ENCODE measurements at regions of chr14 and their contacts with region 1.

Region 1: DNA sequence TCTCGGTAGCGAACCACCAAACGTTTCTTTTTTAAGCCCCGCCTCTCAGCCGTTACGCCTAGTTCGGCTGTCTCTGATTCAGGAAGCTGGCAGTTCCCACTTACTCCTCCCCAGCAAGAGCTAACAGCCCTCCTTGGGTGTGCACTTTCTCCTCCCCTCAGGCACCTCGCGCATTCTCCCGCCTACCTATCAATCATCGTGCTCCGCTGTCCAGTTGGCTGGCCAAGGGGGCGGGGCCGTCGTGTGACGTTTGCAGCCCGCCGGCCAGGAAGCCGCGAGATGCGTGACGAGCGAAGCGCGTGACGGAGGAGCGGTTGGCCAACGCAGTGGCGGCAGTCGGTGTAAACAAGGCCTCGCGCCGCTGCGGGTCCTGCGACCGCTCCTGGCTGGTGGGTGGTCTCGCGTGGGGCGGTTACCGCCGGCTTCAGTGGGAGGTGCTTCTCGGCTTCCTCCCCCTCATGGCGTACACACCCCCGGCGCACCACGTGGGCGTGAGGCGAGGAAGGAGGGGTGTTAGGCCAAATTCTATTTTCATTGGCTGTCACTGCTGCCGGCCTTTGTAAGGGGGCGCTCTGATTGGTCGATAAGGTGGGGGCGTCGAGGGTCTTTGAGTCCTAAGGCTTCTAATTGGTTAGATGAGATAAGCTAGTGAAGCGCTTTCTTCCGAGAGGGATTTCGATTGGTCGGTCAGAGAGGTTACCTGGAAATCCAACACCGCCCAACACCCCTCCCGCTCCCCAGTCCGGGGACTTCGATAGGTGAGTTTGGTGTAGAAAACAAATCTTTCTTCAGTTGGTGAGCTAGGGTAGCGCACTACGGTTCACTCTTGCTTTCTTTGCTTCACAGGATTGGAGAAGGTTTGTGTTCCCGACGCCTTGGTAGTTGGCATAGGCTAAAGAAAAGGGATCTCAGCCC is at the starts of genes DCAF11 and NRL:
- DNase-seq: peak; percentile 100
- H3K4me3 ChIP-seq: peak within 1 kb of the TSS; percentile 46 to 92 (median 84)
- H3K27ac ChIP-seq: peak within 1 kb of the TSS; percentile 88
- H3K4me1 ChIP-seq: peaks cover 13% of the 10 kb centered on the region
- H3K27me3 ChIP-seq: no peaks in the 10 kb centered on the region
- CTCF ChIP-seq: no peak
- POLR2A ChIP-seq: peak; percentile 39
- total RNA-seq, gene DCAF11: 32.1 and 38.5 TPM in 2 replicates
- total RNA-seq, gene NRL: 0.62 and 0.71 TPM in 2 replicates

Region 2: DNA sequence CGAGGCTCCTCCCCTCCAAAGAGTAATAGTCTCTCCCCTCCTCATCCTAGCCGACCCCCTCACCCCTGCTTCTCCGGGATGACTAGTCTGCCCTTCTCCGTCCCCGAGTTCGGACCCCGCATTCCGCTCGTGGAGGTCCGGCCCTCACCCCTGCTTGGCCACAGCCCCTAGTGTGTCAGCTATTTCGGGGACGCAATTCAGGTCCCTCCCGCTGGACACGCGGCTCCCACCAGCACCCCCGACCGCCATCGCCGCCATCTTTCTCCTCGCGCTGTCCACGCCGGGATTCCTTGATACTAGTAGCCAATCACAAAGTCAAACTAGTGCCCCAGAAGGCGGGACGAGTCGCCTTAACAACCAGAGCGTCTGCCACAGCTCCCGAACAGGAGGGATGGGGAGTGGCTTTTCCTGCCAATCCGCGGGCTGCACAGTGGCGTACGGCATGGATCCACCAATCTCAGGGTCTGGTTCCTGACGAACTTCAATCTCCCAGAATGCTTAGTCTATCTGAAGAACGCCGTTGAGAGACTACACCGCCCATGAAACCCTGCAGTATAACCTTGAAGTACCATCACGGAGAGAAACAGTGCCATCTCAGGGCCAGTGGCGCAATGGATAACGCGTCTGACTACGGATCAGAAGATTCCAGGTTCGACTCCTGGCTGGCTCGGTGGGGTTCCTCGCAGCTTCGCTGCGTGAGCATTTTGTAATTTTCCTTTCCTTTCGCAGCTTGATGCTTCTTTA is 1185.5 kb before region 1 on chr14 and contains the start of gene PRMT5:
- CTCF ChIA-PET with region 1: no interaction called
- POLR2A ChIA-PET with region 1: no interaction called
- dilution Hi-C with region 1: no loop called
- intact Hi-C with region 1: loop called (anchors 5 kb)
- DNase-seq: peak; percentile 100
- H3K4me3 ChIP-seq: peak within 1 kb of the TSS; percentile 66 to 95 (median 81)
- H3K27ac ChIP-seq: peak within 1 kb of the TSS; percentile 68
- H3K4me1 ChIP-seq: peaks cover 16% of the 10 kb centered on the region
- H3K27me3 ChIP-seq: no peaks in the 10 kb centered on the region
- CTCF ChIP-seq: no peak
- POLR2A ChIP-seq: peak; percentile 64
- total RNA-seq, gene PRMT5: 67.2 and 73.1 TPM in 2 replicates

Region 3: DNA sequence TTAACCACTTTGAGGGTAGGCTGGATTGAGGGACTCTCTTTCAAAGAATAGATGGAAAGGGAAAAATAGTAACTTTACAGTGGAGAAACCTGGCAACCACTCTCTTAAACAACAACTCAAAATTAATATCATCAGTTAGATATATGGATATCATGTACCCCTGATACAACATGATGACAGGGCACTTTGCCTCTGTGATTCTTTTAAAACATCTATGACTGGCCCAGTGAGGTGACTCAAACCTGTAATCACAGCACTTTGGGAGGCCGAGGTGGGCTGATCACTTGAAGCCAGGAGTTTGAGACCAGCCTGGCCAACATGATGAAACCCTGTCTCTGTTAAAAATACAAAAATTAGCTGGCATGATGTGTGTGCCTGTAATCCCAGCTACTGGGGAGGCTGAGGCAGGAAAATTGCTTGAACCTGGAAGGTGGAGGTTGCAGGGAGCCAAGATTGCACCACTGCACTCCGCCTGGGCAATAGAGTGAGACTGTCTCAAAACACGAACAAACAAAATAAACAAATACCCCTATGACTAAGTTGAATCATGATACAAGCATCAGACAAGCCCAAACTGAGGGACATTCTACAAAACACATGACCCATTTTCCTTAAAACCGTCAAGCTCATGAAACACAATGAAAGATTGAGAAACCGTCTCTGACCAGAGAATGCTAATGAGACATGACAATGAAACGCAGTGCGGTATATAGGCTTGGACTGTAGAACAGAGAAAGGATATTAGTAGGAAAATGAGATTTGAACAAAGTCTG is 905.0 kb before region 1 on chr14:
- CTCF ChIA-PET with region 1: no interaction called
- POLR2A ChIA-PET with region 1: no interaction called
- dilution Hi-C with region 1: no loop called
- intact Hi-C with region 1: no loop called
- DNase-seq: no peak
- H3K4me3 ChIP-seq: no peak overlapping the region
- H3K27ac ChIP-seq: no peak overlapping the region
- H3K4me1 ChIP-seq: no peaks in the 10 kb centered on the region
- H3K27me3 ChIP-seq: peaks cover 5 to 11% of the 10 kb centered on the region in 2 experiments
- CTCF ChIP-seq: no peak
- POLR2A ChIP-seq: no peak

Region 4: GRCh38 chr14:24071144-24071697 is 43.6 kb before region 1 on chr14 and contains the start of gene CPNE6:
- CTCF ChIA-PET with region 1: no interaction called
- POLR2A ChIA-PET with region 1: no interaction called
- dilution Hi-C with region 1: no loop called
- intact Hi-C with region 1: no loop called
- DNase-seq: no peak
- H3K4me3 ChIP-seq: no peak within 1 kb of the TSS
- H3K27ac ChIP-seq: no peak within 1 kb of the TSS
- H3K4me1 ChIP-seq: no peaks in the 10 kb centered on the region
- H3K27me3 ChIP-seq: no peaks in the 10 kb centered on the region
- CTCF ChIP-seq: no peak
- POLR2A ChIP-seq: no peak
- total RNA-seq, gene CPNE6: not detected in 2 replicates

Region 5: DNA sequence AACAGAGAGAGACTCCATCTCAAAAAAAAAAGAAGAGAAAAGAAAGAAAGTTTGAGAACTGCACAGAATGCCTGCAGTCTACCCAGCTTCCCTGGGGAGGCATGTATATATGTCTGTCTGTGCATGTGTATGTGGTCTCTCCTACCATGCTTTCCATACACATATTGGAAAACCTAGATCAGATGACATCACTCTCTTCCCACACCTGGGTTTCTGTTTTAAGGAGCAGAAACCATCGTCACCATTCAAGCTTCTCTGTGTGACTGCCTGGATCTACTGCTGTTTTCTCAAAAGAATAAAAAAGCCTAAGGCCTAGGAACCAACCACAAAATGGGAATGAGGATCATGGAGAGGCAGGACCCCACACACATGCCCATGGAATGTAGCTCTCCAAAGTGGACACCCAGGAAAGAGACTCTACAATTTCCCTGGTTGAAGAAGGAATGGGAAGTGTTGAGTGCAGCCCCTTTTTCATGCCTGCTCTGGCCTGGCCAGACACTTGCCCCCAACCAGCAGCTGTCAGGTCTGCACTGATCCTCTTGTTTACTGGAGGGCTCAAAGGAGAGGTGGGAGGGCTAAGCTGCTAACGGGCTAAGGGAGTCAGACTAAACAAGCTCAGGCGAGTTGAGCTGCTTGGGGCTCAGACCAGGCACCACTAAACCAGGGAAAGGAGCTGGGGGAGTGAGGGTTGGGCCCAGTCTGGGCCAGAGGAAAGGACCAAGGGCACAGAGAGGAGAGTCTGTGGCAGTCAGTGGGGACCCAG is 28.4 kb before region 1 on chr14:
- CTCF ChIA-PET with region 1: interaction called, 126 read pairs
- POLR2A ChIA-PET with region 1: no interaction called
- dilution Hi-C with region 1: no loop called
- intact Hi-C with region 1: no loop called
- DNase-seq: no peak
- H3K4me3 ChIP-seq: no peak overlapping the region
- H3K27ac ChIP-seq: no peak overlapping the region
- H3K4me1 ChIP-seq: no peaks in the 10 kb centered on the region
- H3K27me3 ChIP-seq: peaks cover 14 to 20% of the 10 kb centered on the region in 2 experiments
- CTCF ChIP-seq: no peak
- POLR2A ChIP-seq: no peak

Region 6: GRCh38 chr14:24135834-24136542 is 21.2 kb after region 1 on chr14 and contains the start of gene PSME1:
- CTCF ChIA-PET with region 1: interaction called, 11 read pairs
- POLR2A ChIA-PET with region 1: interaction called, 10 read pairs
- dilution Hi-C with region 1: no loop called
- intact Hi-C with region 1: loop called (anchors 1 kb)
- DNase-seq: peak; percentile 92
- H3K4me3 ChIP-seq: peak within 1 kb of the TSS; percentile 56 to 93 (median 90)
- H3K27ac ChIP-seq: peak within 1 kb of the TSS; percentile 54
- H3K4me1 ChIP-seq: peaks cover 15% of the 10 kb centered on the region
- H3K27me3 ChIP-seq: no peaks in the 10 kb centered on the region
- CTCF ChIP-seq: no peak
- POLR2A ChIP-seq: peak; percentile 78
- total RNA-seq, gene PSME1: 120 and 135 TPM in 2 replicates

Region 7: DNA sequence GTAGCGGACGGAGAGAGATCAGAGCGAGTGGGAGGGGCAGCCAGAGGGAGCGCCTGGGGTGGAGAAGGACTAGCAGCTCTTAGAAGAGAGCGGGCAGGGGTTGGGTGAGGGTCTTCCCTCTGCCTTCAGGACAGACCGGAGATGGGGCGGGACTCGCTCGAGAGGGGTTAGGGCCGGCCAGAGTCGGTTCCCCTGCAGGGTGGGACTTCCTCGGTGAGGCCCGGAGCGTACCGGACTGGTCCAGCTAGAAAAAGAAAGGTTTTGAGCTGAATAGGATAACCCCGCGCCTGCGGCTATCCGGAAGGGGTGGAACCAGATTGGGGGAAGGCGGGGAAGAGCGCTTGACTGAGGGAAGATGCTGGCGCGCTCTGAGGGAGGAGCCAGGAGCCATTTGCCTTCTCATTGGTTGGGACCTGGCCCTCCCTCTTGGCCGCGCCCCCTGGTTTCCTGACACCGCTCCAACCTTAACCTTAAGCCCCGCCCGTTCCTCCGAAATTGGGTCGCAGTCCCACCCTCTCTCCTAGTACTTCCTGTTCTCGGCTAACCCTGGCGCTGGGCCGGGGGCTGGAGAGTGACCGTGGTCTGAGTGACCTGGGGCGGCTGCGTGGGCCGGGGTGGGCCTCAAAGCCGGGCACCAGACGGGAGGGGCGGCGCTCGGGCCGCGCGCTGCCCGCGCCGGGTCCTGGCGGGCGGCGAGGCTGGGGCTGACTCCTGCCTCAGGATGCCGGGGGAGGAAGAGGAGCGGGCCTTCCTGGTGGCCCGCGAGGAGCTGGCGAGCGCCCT is 32.4 kb after region 1 on chr14 and contains the start of gene RNF31:
- CTCF ChIA-PET with region 1: interaction called, 3 read pairs
- POLR2A ChIA-PET with region 1: interaction called, 13 read pairs
- dilution Hi-C with region 1: no loop called
- intact Hi-C with region 1: loop called (anchors 1 kb)
- DNase-seq: peak; percentile 97
- H3K4me3 ChIP-seq: peak within 1 kb of the TSS; percentile 59 to 86 (median 79)
- H3K27ac ChIP-seq: peak within 1 kb of the TSS; percentile 52
- H3K4me1 ChIP-seq: peaks cover 17% of the 10 kb centered on the region
- H3K27me3 ChIP-seq: no peaks in the 10 kb centered on the region
- CTCF ChIP-seq: no peak
- POLR2A ChIP-seq: peak; percentile 75
- total RNA-seq, gene RNF31: 66.5 and 69.7 TPM in 2 replicates

Region 8: GRCh38 chr14:24232121-24232644 is 117.4 kb after region 1 on chr14 and contains the start of gene NEDD8:
- CTCF ChIA-PET with region 1: no interaction called
- POLR2A ChIA-PET with region 1: no interaction called
- dilution Hi-C with region 1: no loop called
- intact Hi-C with region 1: loop called (anchors 1 kb)
- DNase-seq: peak; percentile 94
- H3K4me3 ChIP-seq: peak within 1 kb of the TSS; percentile 63 to 87 (median 67)
- H3K27ac ChIP-seq: peak within 1 kb of the TSS; percentile 88
- H3K4me1 ChIP-seq: peaks cover 31% of the 10 kb centered on the region
- H3K27me3 ChIP-seq: no peaks in the 10 kb centered on the region
- CTCF ChIP-seq: no peak
- POLR2A ChIP-seq: peak; percentile 40
- total RNA-seq, gene NEDD8: 243 and 261 TPM in 2 replicates